CD4-positive, alpha-beta T cell (primary cell): ENCODE measurements at regions of chr2 and their contacts with region 1.

Region 1: DNA sequence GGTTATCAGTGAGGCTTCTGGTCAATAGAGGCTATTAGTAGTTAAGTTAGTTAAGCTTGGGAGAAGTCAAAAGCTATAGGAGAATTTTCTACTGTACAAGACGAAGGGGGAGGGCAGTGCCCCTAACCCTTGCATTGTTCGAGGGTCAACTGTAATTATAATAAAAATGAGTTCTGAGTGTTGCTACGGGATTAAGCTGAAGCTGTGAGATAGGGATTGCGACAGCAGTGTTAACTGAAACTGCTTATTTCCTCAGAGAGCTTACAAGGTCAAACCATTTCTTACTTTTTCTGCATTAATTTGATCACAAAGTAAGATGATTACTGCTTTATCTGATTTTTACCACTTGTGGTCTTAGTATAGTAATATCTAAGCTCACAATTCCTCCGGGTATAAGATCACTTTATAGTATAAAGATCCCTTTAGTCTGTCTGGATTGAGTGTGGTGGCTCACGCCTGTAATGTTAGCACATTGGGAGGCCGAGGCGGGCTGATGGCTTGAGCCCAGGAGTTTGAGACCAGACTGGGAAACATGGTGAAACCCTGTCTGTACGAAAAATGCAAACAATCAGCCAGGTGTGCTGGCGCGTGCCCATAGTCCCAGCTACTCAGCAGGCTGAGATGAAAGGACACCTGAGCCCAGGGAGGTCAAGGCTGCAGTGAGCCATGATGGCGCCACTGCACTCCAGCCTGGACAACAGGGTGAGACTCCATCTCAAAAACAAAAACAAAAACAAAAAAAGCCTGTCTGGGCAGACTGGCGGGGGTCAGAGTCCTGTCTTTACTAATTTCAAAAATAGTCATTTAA is 119.5 kb upstream of the TLK1 start:
- DNase-seq: no peak
- ATAC-seq: no peak
- H3K4me3 ChIP-seq: no peak overlapping the region
- H3K4me3 Mint-ChIP-seq: no peak overlapping the region
- H3K27ac ChIP-seq: no peak overlapping the region
- H3K27ac Mint-ChIP-seq: no peak overlapping the region
- H3K4me1 ChIP-seq: no peaks in the 10 kb centered on the region
- H3K4me1 Mint-ChIP-seq: no peaks in the 10 kb centered on the region
- H3K27me3 ChIP-seq: no peaks in the 10 kb centered on the region
- H3K27me3 Mint-ChIP-seq: no peaks in the 10 kb centered on the region
- CTCF ChIP-seq: no peak

Region 2: DNA sequence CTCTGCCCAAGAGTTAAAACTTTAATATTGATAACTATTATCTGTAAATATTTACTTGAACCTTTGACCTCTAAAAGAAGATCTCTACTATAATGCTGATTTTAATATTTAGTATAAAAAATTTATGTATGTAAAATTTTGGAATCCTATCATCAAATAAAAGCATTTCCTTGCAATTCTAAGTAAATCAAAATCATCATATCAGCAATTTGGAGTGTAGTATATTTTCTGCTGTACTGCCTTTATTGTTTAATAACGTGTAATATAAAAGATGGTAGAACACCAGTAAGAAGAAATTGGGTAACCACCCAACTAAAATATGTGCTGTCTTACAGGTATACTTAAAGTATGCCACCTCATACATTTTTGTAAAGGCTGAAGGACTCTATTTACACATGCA is 214.1 kb before region 1 on chr2:
- CTCF ChIA-PET with region 1: no interaction called
- POLR2A ChIA-PET with region 1: no interaction called
- intact Hi-C with region 1: no loop called
- DNase-seq: no peak
- ATAC-seq: no peak
- H3K4me3 ChIP-seq: no peak overlapping the region
- H3K4me3 Mint-ChIP-seq: no peak overlapping the region
- H3K27ac ChIP-seq: no peak overlapping the region
- H3K27ac Mint-ChIP-seq: no peak overlapping the region
- H3K4me1 ChIP-seq: no peaks in the 10 kb centered on the region
- H3K4me1 Mint-ChIP-seq: peaks cover 40% of the 10 kb centered on the region
- H3K27me3 ChIP-seq: no peaks in the 10 kb centered on the region
- H3K27me3 Mint-ChIP-seq: no peaks in the 10 kb centered on the region
- CTCF ChIP-seq: no peak

Region 3: GRCh38 chr2:171217330-171217729 is 62.9 kb before region 1 on chr2:
- CTCF ChIA-PET with region 1: no interaction called
- POLR2A ChIA-PET with region 1: no interaction called
- intact Hi-C with region 1: loop called in 1 of 2 experiments (anchors 5 kb)
- DNase-seq: no peak
- ATAC-seq: no peak
- H3K4me3 ChIP-seq: no peak overlapping the region
- H3K4me3 Mint-ChIP-seq: no peak overlapping the region
- H3K27ac ChIP-seq: no peak overlapping the region
- H3K27ac Mint-ChIP-seq: no peak overlapping the region
- H3K4me1 ChIP-seq: no peaks in the 10 kb centered on the region
- H3K4me1 Mint-ChIP-seq: peaks cover 2% of the 10 kb centered on the region
- H3K27me3 ChIP-seq: no peaks in the 10 kb centered on the region
- H3K27me3 Mint-ChIP-seq: no peaks in the 10 kb centered on the region
- CTCF ChIP-seq: no peak